Prostate gland (tissue), 2 donors: ENCODE measurements at regions of chr9 and their contacts with region 1.

Region 1: DNA sequence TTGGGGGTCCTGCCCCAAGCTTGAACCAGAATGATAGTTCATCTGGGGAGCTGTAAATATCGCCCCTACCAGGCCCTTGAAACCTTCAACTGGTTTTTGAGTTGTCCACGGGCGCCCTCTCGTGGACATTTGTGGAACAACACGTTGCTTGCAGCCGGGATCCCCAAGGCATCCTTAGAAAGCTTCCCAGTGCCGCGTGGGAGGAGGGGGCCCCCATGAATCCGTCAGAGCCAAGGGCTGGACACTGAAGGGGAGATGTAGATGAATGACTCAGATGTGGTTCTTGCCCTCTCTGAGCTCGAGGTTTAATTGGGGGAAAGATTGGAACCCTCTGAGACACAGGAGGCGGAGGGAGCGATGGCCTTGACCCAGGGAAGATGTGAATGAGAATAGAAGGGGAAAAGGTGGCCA is 31.8 kb upstream of the ORM1 start:
- DNase-seq: peak; percentile 56
- H3K4me3 ChIP-seq: no peak overlapping the region
- H3K27ac ChIP-seq: no peak overlapping the region
- H3K4me1 ChIP-seq: no peaks in the 10 kb centered on the region
- H3K27me3 ChIP-seq: no peaks in the 10 kb centered on the region
- CTCF ChIP-seq: peak; percentile 89 to 96 (median 94)
- POLR2A ChIP-seq: no peak

Region 2: DNA sequence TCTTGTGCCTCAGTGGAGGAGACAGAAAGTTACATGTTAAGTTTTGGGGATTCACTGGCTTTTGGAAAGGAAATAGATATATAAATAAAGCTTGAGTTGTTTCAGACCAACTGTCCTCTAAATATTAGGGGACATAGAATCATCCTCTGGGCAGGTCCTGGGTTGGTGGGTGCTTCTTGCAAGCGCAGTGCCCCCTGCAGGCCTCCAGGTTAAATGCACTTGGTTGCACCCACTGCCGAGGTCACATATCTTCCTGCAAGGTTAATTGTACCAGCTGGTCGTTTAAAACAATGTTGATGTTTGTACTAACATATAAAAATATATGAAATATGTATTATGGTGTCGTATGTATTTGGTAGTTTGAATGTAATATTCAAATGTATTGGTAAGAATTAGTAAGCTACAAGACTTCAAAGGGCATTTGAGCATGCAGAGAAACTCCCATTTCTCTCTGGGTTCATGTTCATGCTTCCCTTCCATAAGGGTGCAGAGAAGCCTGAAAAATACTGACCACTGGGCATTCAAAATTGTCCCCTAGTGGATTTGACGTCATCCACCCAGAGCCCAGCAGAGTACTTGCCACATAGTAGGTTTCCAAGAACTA is 327.9 kb before region 1 on chr9:
- intact Hi-C with region 1: no loop called
- DNase-seq: no peak
- H3K4me3 ChIP-seq: no peak overlapping the region
- H3K27ac ChIP-seq: no peak overlapping the region
- H3K4me1 ChIP-seq: no peaks in the 10 kb centered on the region
- H3K27me3 ChIP-seq: no peaks in the 10 kb centered on the region
- CTCF ChIP-seq: peak in 3 of 4 experiments; percentile 44 to 54 (median 52)
- POLR2A ChIP-seq: no peak

Region 3: DNA sequence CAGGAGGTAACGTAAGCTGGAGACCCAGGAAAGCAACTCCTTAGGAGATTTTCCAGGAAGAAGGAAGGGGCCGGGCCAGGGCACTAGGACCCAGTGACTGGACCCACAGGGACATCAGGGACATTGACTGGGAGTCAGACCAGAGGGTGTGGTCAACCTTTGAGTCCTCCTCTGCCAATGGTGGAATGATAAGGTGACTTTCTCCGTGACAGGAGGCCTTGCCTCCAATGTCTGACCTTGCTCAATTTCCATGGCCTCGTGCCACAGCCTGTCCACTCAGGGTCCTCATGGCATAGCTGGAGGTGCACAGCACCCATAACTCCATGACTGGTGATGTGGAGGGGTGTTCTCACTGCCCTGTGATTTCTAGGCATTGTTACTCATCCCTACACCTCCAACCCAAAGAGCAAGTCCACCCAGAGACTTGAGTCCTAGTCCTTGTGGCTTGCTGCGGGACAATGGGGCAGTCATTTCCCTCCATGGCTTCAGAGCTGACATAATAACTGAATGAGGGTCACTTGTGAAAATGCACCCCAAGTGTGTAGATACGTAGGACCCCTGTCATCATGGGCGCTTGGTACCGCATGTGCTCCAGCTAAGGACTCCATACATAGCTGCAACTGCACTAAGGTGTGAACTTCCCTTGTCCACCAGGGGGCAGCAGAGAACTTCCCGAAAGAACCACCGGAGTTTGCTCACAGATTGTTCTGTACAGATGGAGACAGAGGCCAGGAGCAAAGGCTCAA is 208.9 kb before region 1 on chr9:
- intact Hi-C with region 1: loop called (anchors 2 kb)
- DNase-seq: peak; percentile 93
- H3K4me3 ChIP-seq: no peak overlapping the region
- H3K27ac ChIP-seq: no peak overlapping the region
- H3K4me1 ChIP-seq: no peaks in the 10 kb centered on the region
- H3K27me3 ChIP-seq: no peaks in the 10 kb centered on the region
- CTCF ChIP-seq: peak; percentile 93 to 96 (median 94)
- POLR2A ChIP-seq: no peak

Region 4: DNA sequence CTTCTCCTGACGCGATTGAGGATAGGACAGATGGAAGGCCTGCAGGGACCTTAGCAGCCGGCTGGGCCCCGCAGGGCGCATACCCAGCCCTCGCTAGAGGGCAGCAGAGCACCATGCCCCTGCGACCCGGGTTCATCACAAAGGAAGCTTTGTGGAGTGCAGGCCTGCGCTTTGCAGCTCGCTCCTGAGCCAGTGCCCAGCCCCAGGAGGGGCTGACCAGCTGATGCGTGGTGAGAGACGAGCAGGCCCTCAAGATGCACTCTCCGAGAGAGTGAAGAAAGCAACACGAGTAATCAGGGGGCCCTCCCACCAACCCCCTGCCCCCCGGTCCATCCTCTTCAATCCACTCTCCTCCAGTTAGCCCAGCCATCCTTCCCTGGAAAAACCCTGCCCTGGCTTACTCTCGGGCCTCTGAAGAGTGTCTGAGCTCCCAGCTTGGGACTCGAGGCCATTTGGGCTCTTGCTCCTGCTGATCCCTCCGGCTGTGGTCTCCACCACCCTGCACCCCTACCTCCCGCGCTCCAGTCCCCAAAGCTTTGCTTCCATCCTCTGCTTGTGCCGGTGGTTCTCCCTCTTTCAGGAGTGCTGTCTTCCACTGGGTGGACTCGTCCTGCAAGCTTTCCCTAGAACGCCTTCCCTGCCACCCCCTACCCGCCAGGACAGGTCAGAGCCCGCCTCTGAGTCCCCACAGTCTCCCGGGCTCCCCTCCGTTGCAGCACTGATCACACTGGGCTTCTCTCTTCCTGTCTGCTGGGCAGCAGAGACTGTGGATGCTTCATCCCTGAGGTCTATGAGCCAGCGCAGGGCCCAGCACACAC is 182.8 kb before region 1 on chr9:
- intact Hi-C with region 1: loop called (anchors 2 kb)
- DNase-seq: peak; percentile 79
- H3K4me3 ChIP-seq: no peak overlapping the region
- H3K27ac ChIP-seq: no peak overlapping the region
- H3K4me1 ChIP-seq: no peaks in the 10 kb centered on the region
- H3K27me3 ChIP-seq: no peaks in the 10 kb centered on the region
- CTCF ChIP-seq: peak; percentile 84 to 98 (median 95)
- POLR2A ChIP-seq: no peak